H1 (cell line): ENCODE measurements at regions of chr16 and their contacts with region 1.

Region 1: DNA sequence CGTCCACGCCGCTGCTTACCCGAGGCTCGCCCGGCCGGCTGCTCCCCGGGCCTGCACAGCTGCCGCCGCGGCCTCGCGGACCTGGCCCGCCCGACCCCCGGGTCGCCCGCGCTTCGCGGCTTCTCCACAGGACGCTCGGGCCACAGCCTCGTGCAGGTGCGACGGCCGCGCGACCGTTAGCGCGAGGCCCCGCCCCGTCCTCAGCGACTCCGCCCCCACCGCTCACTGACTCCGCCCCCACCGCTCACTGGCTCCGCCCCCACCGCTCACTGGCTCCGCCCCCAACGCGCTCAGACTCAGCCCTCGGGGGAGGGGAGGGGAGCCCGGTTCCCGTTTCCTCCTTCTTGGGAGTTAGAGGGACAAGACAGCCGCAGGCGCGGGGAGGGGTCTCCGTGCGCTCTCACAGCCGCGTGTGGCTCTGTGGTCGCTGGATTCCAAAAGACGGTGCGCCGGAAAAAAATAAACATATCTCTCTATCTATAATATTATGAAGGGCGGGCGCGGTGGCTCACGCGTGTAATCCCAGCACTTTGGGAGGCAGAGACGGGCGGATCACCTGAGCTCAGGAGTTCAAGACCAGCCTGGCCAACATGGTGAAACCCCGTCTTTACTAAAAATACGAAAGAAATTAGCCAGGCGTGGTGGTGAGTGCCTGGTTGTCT is at the start of gene MEIOB:
- DNase-seq: peak; percentile 41 to 96
- H3K4me3 ChIP-seq: peak within 1 kb of the TSS; percentile 31 to 62 (median 32); a peak in 7 of 8 replicates
- H3K27ac ChIP-seq: no peak within 1 kb of the TSS
- H3K4me1 ChIP-seq: peaks cover 0 to 4% (median 0%) of the 10 kb centered on the region in 4 experiments; a peak in 1 of 7 replicates
- H3K27me3 ChIP-seq: peaks cover 0 to 15% (median 6%) of the 10 kb centered on the region in 4 experiments; a peak in 6 of 7 replicates
- CTCF ChIP-seq: no peak
- EP300 ChIP-seq: no peak
- POLR2A ChIP-seq: no peak
- RAD21 ChIP-seq: no peak
- total RNA-seq, gene MEIOB: 0.99 and 1.1 TPM in 2 replicates

Region 2: DNA sequence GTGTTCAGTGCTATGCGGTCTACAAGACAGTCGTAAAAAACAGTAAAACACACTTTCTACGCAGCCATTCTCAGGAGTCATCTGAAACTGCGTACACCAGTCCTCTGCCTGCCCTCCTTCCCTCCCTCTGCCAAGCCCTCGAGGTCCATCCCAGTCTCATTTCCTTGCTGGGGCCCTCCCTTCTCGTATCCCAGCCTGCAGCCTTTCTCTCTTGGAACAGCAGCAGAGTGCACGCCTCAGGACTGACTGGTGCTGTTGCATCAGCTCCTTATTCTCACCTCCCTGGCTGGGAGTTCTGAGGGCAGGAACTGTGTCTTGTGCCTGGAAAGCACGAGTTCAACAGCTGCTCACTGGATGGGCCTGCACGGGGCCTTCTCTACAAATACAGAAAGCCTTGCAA is 32.6 kb before region 1 on chr16:
- CTCF ChIA-PET with region 1: no interaction called
- POLR2A ChIA-PET with region 1: no interaction called
- DNase-seq: no peak
- H3K4me3 ChIP-seq: no peak overlapping the region
- H3K27ac ChIP-seq: no peak overlapping the region
- H3K4me1 ChIP-seq: no peaks in the 10 kb centered on the region
- H3K27me3 ChIP-seq: no peaks in the 10 kb centered on the region; a peak in 2 of 7 replicates
- CTCF ChIP-seq: no peak
- EP300 ChIP-seq: no peak
- POLR2A ChIP-seq: no peak
- RAD21 ChIP-seq: no peak

Region 3: DNA sequence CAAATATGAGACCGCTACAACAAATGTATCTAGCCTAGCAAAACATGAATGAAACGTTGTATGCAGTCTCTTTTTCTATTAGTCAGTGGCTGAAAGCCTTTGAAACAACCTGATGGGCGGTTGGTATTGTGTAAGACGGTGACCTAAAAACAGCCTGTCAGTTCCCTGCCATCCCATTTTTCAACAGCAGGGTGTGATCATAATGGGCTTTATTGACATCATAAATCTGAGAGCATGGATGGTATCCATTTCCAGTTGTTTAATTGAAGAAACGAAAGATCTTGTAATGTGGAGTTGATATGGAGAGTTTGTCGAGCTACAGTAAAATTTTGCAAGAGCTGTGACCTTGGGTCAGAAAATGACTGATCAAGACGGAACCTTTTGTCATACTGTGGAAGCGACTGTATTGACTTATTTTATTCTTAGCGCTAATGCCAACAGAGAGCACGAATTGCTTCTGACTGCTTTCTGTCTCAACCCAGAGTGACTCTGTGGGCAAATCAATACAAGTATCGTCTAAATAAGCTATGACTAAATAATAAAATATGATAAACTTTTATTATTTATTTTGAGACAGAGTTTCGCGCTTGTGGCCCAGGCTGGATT is 12.2 kb after region 1 on chr16:
- CTCF ChIA-PET with region 1: interaction called, 10 read pairs
- POLR2A ChIA-PET with region 1: no interaction called
- DNase-seq: no peak
- H3K4me3 ChIP-seq: no peak overlapping the region
- H3K27ac ChIP-seq: no peak overlapping the region
- H3K4me1 ChIP-seq: no peaks in the 10 kb centered on the region
- H3K27me3 ChIP-seq: no peaks in the 10 kb centered on the region
- CTCF ChIP-seq: peak in 1 of 3 experiments; percentile 37; a peak in 1 of 4 replicates
- EP300 ChIP-seq: no peak
- POLR2A ChIP-seq: no peak
- RAD21 ChIP-seq: 0 out of 4 replicates have a peak, but pooled peaks of 1 of the 2 experiments have one; percentile 12

Region 4: GRCh38 chr16:2205104-2205966 is 333.2 kb after region 1 on chr16 and contains the start of gene MLST8:
- CTCF ChIA-PET with region 1: no interaction called
- POLR2A ChIA-PET with region 1: no interaction called
- DNase-seq: peak in 1 of 2 experiments; percentile 91
- H3K4me3 ChIP-seq: peak within 1 kb of the TSS; percentile 78 to 97 (median 92)
- H3K27ac ChIP-seq: peak within 1 kb of the TSS; percentile 98
- H3K4me1 ChIP-seq: peaks cover 0 to 13% (median 8%) of the 10 kb centered on the region in 4 experiments; a peak in 6 of 7 replicates
- H3K27me3 ChIP-seq: no peaks in the 10 kb centered on the region; a peak in 3 of 7 replicates
- CTCF ChIP-seq: no peak
- EP300 ChIP-seq: peak in 1 of 2 experiments; percentile 97; a peak in 2 of 3 replicates
- POLR2A ChIP-seq: peak in 1 of 2 experiments; percentile 94; a peak in 2 of 3 replicates
- RAD21 ChIP-seq: no peak
- total RNA-seq, gene MLST8: 67.6 and 69.6 TPM in 2 replicates